IMR-90 (cell line): ENCODE measurements at regions of chr5 and their contacts with region 1.

Region 1: DNA sequence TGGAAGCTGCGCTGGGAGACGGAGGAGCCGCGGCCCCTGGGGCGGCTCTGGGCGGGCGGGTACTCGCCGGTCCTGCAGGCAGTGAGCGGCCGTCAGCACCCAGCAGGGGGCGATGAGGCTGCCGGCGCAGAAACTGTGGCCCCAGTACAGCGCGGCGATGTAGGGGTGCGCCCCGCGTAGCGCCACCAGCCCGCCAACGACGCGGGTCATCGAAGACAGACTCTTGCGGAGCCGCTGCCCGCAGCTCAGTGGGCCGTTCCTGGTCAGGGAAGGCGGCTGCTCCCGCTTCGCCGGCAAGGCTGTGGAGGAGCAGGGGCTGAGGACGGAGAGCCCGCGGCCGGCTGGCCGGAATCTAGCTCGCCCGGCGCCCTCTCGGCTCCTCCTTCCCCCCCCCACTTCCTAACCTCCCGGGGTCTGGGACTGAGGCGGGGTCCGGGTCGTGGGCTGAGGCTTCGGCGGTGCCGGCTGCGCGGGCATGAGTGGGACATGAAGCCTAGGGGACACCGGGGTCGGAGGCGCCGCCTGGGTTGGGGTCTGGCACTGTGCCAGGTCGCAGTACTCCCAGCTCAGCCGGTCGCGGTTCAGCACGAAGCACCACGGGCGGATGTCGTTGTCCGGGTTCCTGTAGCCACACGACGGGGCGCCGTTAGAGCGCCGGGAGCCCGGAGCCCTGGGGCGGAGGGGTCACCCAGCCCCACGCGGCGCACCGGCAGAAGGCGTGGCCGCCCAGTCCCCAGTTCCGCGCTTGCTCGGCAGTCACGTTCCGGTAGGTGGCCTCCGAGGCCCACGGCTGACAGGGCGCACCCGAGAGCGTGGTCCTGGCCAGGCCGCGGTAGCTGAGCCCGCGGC is 3.6 kb upstream of the PFN3 start:
- DNase-seq: peak; percentile 75
- ATAC-seq: peak; percentile 90
- H3K4me3 ChIP-seq: peak overlapping the region; percentile 57
- H3K27ac ChIP-seq: no peak overlapping the region; the same call in 1 of the 2 replicates
- H3K4me1 ChIP-seq: peaks cover 4% of the 10 kb centered on the region; the same call in 1 of the 2 replicates
- H3K27me3 ChIP-seq: peaks cover 54% of the 10 kb centered on the region
- CTCF ChIP-seq: peak; percentile 75
- POLR2A ChIP-seq: no peak
- RAD21 ChIP-seq: peak; percentile 84

Region 2: DNA sequence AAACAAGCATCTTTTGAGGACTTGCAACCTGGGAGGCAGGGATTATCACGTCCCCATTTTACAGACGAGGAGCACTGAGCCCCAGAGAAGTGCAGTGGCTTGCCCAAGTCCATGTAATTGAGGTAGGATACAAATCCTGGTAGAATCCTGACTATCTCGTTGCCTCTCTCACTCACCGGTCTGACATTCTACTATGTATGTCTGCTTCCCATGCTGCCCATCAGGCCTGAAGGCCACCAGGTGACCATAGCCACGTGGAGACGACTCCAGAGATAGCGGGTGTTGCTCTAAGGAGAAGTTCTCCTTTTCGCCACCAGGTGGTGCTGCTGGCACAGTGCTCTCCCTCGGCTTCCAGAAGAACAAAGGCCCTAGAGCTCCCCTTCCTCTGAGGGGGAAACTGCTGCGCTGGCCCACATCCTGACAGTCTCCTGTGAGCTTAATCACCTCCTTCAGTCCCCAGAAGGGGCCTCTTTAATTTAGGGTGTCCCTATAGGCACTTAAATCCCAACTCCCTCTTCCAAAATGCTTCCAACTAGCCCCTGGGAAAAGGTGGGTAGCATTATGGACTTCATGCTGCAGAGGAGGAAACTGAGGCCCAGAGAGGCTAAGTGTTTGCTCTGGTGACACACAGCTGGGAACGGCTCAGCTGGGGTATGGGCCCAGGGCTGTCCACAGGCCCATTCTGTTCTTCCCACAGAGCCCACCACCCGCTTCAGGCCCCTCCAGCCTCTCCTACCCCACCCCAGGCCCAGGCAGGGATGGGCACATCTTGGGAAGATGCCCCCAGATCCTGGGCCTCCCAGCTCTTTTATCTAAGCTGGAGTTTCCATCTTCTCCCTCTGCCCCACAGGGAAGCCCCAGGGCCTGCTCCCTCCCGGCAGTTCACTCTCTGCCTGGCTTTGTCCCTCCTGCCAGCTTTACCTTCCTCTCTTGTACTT is 13.4 kb before region 1 on chr5:
- CTCF ChIA-PET with region 1: interaction called, 56 read pairs
- POLR2A ChIA-PET with region 1: no interaction called
- dilution Hi-C with region 1: no loop called
- in situ Hi-C with region 1: no loop called
- intact Hi-C with region 1: no loop called
- DNase-seq: peak; percentile 80
- ATAC-seq: peak; percentile 84
- H3K4me3 ChIP-seq: no peak overlapping the region
- H3K27ac ChIP-seq: no peak overlapping the region
- H3K4me1 ChIP-seq: peaks cover 16% of the 10 kb centered on the region
- H3K27me3 ChIP-seq: peaks cover 22% of the 10 kb centered on the region
- CTCF ChIP-seq: peak; percentile 95
- POLR2A ChIP-seq: no peak
- RAD21 ChIP-seq: peak; percentile 84

Region 3: GRCh38 chr5:177414481-177414880 is 10.5 kb after region 1 on chr5:
- CTCF ChIA-PET with region 1: interaction called, 15 read pairs
- POLR2A ChIA-PET with region 1: no interaction called
- dilution Hi-C with region 1: no loop called
- in situ Hi-C with region 1: no loop called
- intact Hi-C with region 1: no loop called
- DNase-seq: no peak
- ATAC-seq: no peak
- H3K4me3 ChIP-seq: no peak overlapping the region
- H3K27ac ChIP-seq: no peak overlapping the region
- H3K4me1 ChIP-seq: no peaks in the 10 kb centered on the region
- H3K27me3 ChIP-seq: peaks cover 9% of the 10 kb centered on the region
- CTCF ChIP-seq: no peak
- POLR2A ChIP-seq: no peak
- RAD21 ChIP-seq: no peak

Region 4: GRCh38 chr5:177425801-177426565 is 22.0 kb after region 1 on chr5:
- CTCF ChIA-PET with region 1: interaction called, 13 read pairs
- POLR2A ChIA-PET with region 1: no interaction called
- dilution Hi-C with region 1: no loop called
- in situ Hi-C with region 1: no loop called
- intact Hi-C with region 1: loop called (anchors 1 kb)
- DNase-seq: peak; percentile 100
- ATAC-seq: peak; percentile 94
- H3K4me3 ChIP-seq: peak overlapping the region; percentile 47
- H3K27ac ChIP-seq: peak overlapping the region; percentile 85
- H3K4me1 ChIP-seq: peaks cover 13% of the 10 kb centered on the region
- H3K27me3 ChIP-seq: no peaks in the 10 kb centered on the region
- CTCF ChIP-seq: no peak
- POLR2A ChIP-seq: peak; percentile 70; the same call in 1 of the 2 replicates
- RAD21 ChIP-seq: no peak

Region 5: GRCh38 chr5:177446200-177447065 is 42.4 kb after region 1 on chr5 and contains the start of gene PRR7:
- CTCF ChIA-PET with region 1: interaction called, 44 read pairs
- POLR2A ChIA-PET with region 1: no interaction called
- dilution Hi-C with region 1: no loop called
- in situ Hi-C with region 1: loop called (anchors 5 kb)
- intact Hi-C with region 1: loop called (anchors 2 kb)
- DNase-seq: peak; percentile 64
- ATAC-seq: peak; percentile 77
- H3K4me3 ChIP-seq: peak within 1 kb of the TSS; percentile 92
- H3K27ac ChIP-seq: peak within 1 kb of the TSS; percentile 73; the same call in 1 of the 2 replicates
- H3K4me1 ChIP-seq: peaks cover 10% of the 10 kb centered on the region
- H3K27me3 ChIP-seq: no peaks in the 10 kb centered on the region
- CTCF ChIP-seq: 0 out of 2 replicates have a peak, but pooled peaks have one; percentile 9
- POLR2A ChIP-seq: no peak
- RAD21 ChIP-seq: no peak
- total RNA-seq, gene PRR7: 1.1 TPM in 2 replicates

Region 6: DNA sequence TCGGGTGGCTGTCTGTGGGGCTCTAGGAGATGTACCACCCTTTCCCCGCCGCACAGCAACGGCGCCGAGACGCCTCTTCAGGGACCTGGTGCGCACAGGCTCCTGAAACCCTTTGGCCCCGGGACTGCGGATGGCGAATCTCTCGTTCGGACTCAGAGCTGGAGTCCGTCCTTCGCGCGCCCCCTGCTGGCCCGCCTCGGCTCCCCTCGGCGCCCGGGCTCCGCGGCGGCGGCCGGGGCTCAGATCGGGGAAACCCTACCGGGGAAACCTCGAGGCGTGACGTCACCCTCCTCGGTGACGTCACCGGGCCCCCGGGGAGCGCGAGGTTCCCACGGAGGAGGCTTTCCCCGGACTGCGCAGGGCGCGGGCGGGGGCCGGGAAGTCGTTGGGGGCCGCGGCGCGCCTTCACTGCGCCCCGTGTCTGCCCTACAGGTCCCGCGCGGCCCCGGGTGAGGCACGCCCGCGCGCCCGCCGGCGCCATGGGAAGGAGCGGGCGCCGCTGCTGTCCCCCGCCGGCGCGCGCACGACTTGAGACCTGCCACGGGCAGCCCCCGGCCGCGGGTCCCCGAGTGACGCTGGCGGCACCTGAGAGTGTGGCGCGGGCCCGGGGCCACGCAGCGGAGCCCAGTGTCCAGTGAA is 50.5 kb after region 1 on chr5:
- CTCF ChIA-PET with region 1: interaction called, 44 read pairs
- POLR2A ChIA-PET with region 1: no interaction called
- dilution Hi-C with region 1: no loop called
- in situ Hi-C with region 1: loop called (anchors 5 kb)
- intact Hi-C with region 1: loop called (anchors 1 kb)
- DNase-seq: peak; percentile 80
- ATAC-seq: peak; percentile 58
- H3K4me3 ChIP-seq: peak overlapping the region; percentile 38
- H3K27ac ChIP-seq: no peak overlapping the region; the same call in 1 of the 2 replicates
- H3K4me1 ChIP-seq: peaks cover 8% of the 10 kb centered on the region
- H3K27me3 ChIP-seq: no peaks in the 10 kb centered on the region
- CTCF ChIP-seq: peak; percentile 99
- POLR2A ChIP-seq: 0 out of 2 replicates have a peak, but pooled peaks have one; percentile 24
- RAD21 ChIP-seq: peak; percentile 88